ENCODE measurements at regions of chr17 and their contacts with region 1.

Region 1: GRCh38 chr17:39980351-39981206 is at the start of gene PSMD3:
- DNase-seq: peak; percentile 100
- H3K4me3 ChIP-seq: peak within 1 kb of the TSS; percentile 84 to 100 (median 87)
- H3K27ac ChIP-seq: peak within 1 kb of the TSS; percentile 87
- H3K4me1 ChIP-seq: peaks cover 21% of the 10 kb centered on the region
- H3K27me3 ChIP-seq: peaks cover 6 to 16% of the 10 kb centered on the region in 2 experiments
- CTCF ChIP-seq: peak; percentile 73 to 77
- POLR2A ChIP-seq: peak; percentile 75
- total RNA-seq, gene PSMD3: 136 and 142 TPM in 2 replicates

Region 2: DNA sequence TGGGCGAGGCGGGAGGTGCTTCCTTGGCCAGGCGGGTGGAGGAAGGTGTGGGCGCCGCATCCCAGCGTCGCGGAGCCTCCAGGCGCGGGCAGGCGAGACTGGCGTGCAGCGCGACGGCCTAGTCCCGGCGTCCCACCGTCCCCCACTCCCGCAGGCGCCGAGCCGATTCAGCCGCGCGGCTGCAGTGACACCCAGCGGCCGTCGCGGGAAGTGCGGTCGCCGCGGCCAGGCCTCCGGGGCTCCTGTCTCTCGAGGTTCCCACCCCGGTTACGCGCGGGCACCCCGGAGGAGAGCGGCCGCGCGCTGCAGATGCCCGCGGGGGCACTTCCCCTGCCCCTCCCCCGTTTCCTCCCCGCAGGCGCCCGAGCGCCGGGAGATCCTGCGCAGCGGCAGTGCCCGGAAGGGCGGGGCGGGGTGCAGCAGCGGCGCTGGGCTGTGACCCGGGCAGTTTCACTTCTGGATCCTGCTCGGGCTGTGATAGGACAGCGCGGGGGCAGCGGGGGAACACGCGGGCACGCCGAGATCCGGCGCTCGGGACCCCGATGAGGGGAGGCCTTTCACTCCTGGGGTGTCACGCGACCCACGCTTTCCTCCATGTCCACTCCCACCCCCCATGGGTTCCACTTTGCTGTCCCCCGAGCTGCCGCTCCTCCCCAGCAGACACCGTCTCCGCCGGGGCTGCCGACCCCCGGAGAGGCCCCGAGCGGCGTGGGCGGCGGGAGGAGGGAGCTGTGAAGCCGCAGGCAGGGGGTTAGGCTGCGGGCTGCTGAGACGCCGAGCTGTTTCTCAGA is 226.2 kb before region 1 on chr17:
- CTCF ChIA-PET with region 1: no interaction called
- POLR2A ChIA-PET with region 1: no interaction called
- dilution Hi-C with region 1: no loop called
- intact Hi-C with region 1: loop called (anchors 1 kb)
- DNase-seq: peak; percentile 69
- H3K4me3 ChIP-seq: peak overlapping the region; percentile 54 to 71 (median 60)
- H3K27ac ChIP-seq: no peak overlapping the region
- H3K4me1 ChIP-seq: peaks cover 9% of the 10 kb centered on the region
- H3K27me3 ChIP-seq: peaks cover 8 to 15% of the 10 kb centered on the region in 2 experiments
- CTCF ChIP-seq: peak; percentile 77 to 85
- POLR2A ChIP-seq: peak; percentile 62

Region 3: GRCh38 chr17:39927101-39927928 is 53.3 kb before region 1 on chr17 and contains the starts of genes LRRC3C and ORMDL3:
- CTCF ChIA-PET with region 1: interaction called, 6 read pairs
- POLR2A ChIA-PET with region 1: interaction called, 5 read pairs
- dilution Hi-C with region 1: no loop called
- intact Hi-C with region 1: loop called (anchors 2 kb)
- DNase-seq: peak; percentile 93
- H3K4me3 ChIP-seq: peak within 1 kb of the TSS; percentile 55 to 94 (median 91)
- H3K27ac ChIP-seq: peak within 1 kb of the TSS; percentile 100
- H3K4me1 ChIP-seq: peaks cover 43% of the 10 kb centered on the region
- H3K27me3 ChIP-seq: no peaks in the 10 kb centered on the region
- CTCF ChIP-seq: no peak
- POLR2A ChIP-seq: peak; percentile 70
- total RNA-seq, gene LRRC3C: not detected in 2 replicates
- total RNA-seq, gene ORMDL3: 26.7 and 29.8 TPM in 2 replicates

Region 4: GRCh38 chr17:39963829-39964228 is 16.8 kb before region 1 on chr17:
- CTCF ChIA-PET with region 1: interaction called, 108 read pairs
- POLR2A ChIA-PET with region 1: interaction called, 4 read pairs
- dilution Hi-C with region 1: no loop called
- intact Hi-C with region 1: loop called (anchors 1 kb)
- DNase-seq: no peak
- H3K4me3 ChIP-seq: no peak overlapping the region
- H3K27ac ChIP-seq: no peak overlapping the region
- H3K4me1 ChIP-seq: no peaks in the 10 kb centered on the region
- H3K27me3 ChIP-seq: peaks cover 4% of the 10 kb centered on the region in 2 experiments
- CTCF ChIP-seq: no peak
- POLR2A ChIP-seq: no peak

Region 5: GRCh38 chr17:40005520-40005919 is 24.9 kb after region 1 on chr17:
- CTCF ChIA-PET with region 1: no interaction called
- POLR2A ChIA-PET with region 1: no interaction called
- dilution Hi-C with region 1: no loop called
- intact Hi-C with region 1: no loop called
- DNase-seq: no peak
- H3K4me3 ChIP-seq: no peak overlapping the region
- H3K27ac ChIP-seq: no peak overlapping the region
- H3K4me1 ChIP-seq: no peaks in the 10 kb centered on the region
- H3K27me3 ChIP-seq: no peaks in the 10 kb centered on the region
- CTCF ChIP-seq: no peak
- POLR2A ChIP-seq: no peak